ENCODE measurements at regions of chr13 and their contacts with region 1.

Region 1: DNA sequence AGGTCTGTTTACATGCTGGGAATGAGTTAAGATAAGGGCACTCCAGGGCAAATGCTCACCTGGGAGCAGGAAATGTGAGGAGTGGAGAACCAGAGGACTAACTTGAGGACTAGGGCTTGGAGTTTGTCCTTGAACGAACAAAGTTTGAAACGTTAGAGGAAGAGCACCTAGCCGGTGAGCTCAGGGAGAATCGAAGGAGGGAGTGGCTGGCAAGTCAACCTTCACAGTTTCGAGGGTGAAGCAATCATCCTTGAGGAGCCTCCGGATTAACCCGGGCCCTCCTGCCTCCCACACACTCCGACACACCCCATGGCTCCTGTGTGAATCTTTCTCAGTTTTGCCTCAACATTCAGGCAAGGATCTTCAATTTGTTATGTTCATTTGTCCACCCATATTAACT is 58.6 kb downstream of the LMO7 start:
- DNase-seq: no peak
- ATAC-seq: no peak
- H3K4me3 Mint-ChIP-seq: no peak overlapping the region
- H3K27ac Mint-ChIP-seq: no peak overlapping the region
- H3K4me1 Mint-ChIP-seq: no peaks in the 10 kb centered on the region
- H3K27me3 Mint-ChIP-seq: no peaks in the 10 kb centered on the region

Region 2: DNA sequence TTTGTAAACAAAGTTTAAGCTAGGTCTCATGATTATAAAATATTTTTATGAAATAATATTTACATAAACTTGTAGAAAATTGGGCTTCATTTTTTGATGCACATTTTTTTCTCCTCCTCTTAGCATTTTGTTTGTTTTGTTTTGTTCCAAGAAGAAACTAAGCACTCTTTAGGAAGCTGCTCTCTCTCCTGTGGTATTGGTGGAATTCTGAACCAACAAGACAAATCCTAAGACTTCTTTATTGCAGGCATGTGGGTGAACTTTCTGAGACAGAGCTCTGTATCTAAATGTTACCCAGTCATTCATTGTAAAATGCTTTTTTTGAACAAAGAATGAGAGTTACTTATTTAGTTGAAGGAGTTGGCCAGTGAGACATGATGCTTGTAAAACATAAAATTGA is 19.3 kb before region 1 on chr13:
- CTCF ChIA-PET with region 1: interaction called, 28 read pairs
- POLR2A ChIA-PET with region 1: no interaction called
- intact Hi-C with region 1: no loop called
- DNase-seq: no peak
- ATAC-seq: no peak
- H3K4me3 Mint-ChIP-seq: no peak overlapping the region
- H3K27ac Mint-ChIP-seq: no peak overlapping the region
- H3K4me1 Mint-ChIP-seq: no peaks in the 10 kb centered on the region
- H3K27me3 Mint-ChIP-seq: no peaks in the 10 kb centered on the region

Region 3: GRCh38 chr13:75803164-75803611 is 108.5 kb after region 1 on chr13:
- CTCF ChIA-PET with region 1: interaction called, 11 read pairs
- POLR2A ChIA-PET with region 1: no interaction called
- intact Hi-C with region 1: loop called (anchors 1 to 2 kb)
- DNase-seq: peak; percentile 24
- ATAC-seq: peak; percentile 43
- H3K4me3 Mint-ChIP-seq: no peak overlapping the region
- H3K27ac Mint-ChIP-seq: peak overlapping the region; percentile 55
- H3K4me1 Mint-ChIP-seq: peaks cover 55% of the 10 kb centered on the region
- H3K27me3 Mint-ChIP-seq: no peaks in the 10 kb centered on the region

Region 4: GRCh38 chr13:75870397-75870903 is 175.7 kb after region 1 on chr13:
- CTCF ChIA-PET with region 1: interaction called, 56 read pairs
- POLR2A ChIA-PET with region 1: interaction called, 3 read pairs
- intact Hi-C with region 1: loop called (anchors 1 kb)
- DNase-seq: peak; percentile 10
- ATAC-seq: peak; percentile 27
- H3K4me3 Mint-ChIP-seq: no peak overlapping the region
- H3K27ac Mint-ChIP-seq: peak overlapping the region; percentile 58
- H3K4me1 Mint-ChIP-seq: peaks cover 19% of the 10 kb centered on the region
- H3K27me3 Mint-ChIP-seq: peaks cover 8% of the 10 kb centered on the region

Region 5: DNA sequence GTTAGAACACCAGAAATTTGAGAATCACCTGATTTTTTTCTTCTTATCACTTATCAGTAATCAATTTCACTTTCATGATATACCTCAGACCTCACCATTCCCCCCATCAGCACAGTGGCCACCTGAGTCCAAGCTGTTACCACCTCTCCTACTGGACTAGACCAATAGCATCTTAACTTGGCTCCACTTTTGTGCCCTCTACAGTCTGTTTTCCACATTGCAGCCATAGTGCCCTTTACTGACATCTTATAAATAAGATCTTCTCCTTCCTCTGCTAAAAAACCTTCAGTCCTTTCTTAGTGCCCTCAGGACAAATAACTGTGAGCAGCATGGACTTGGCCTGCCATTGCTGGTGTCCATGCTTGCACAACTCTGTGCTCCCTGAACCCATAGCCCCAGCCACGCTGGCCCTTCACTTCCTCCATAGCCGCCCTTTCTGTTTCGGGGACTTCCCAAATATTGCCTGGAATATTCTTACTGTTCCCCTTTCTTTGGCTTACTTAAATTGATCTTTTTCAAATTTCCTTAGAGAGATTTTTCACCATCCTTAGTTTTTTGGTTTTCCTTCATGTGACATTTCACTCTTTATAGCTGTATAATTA is 322.2 kb after region 1 on chr13:
- CTCF ChIA-PET with region 1: interaction called, 5 read pairs
- POLR2A ChIA-PET with region 1: no interaction called
- intact Hi-C with region 1: loop called (anchors 2 kb)
- DNase-seq: peak; percentile 42
- ATAC-seq: peak; percentile 64
- H3K4me3 Mint-ChIP-seq: no peak overlapping the region
- H3K27ac Mint-ChIP-seq: no peak overlapping the region
- H3K4me1 Mint-ChIP-seq: no peaks in the 10 kb centered on the region
- H3K27me3 Mint-ChIP-seq: no peaks in the 10 kb centered on the region

Region 6: DNA sequence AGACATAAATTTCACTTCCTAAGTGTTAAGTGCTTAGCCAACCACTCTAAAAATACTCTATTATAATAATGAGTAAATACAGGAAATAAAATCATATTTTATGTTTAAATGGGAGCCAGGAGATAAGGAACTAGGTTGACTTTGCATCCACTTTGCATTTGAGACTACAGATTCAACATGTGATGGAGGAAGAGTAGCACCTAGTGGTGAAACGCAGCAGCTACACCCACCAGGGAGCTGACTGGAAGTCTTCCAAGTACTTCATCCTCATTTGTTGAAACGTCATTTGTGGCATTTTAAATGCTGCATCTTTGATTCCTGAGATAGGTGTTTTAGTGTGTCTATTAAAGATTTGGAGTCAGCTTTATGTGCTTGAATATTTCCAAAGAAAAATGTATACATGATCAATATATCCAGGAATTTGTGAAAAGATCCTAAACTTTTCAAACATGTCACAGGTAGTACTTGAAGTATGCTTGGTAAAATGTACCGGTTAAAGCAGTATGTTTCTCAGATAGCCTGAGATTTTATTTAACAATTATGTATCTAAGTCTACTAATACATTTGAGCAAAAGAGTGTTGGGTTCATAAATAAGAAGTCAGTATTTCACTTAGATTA is 1208.9 kb after region 1 on chr13:
- CTCF ChIA-PET with region 1: interaction called, 11 read pairs
- POLR2A ChIA-PET with region 1: no interaction called
- intact Hi-C with region 1: loop called in 1 of 2 experiments (anchors 5 kb)
- DNase-seq: peak; percentile 79
- ATAC-seq: peak; percentile 80
- H3K4me3 Mint-ChIP-seq: no peak overlapping the region
- H3K27ac Mint-ChIP-seq: no peak overlapping the region
- H3K4me1 Mint-ChIP-seq: no peaks in the 10 kb centered on the region
- H3K27me3 Mint-ChIP-seq: peaks cover 10% of the 10 kb centered on the region

Measured in activated CD4-positive, alpha-beta T cell treated with anti-CD3 and anti-CD28 coated beads for 36 hours (primary cell).